OCI-LY7 (cell line): ENCODE measurements at regions of chr4 and their contacts with region 1.

Region 1: GRCh38 chr4:153038623-153039311 is 102.6 kb downstream of the FHDC1 start:
- DNase-seq: no peak
- H3K4me3 ChIP-seq: no peak overlapping the region
- H3K27ac ChIP-seq: no peak overlapping the region
- H3K4me1 ChIP-seq: no peaks in the 10 kb centered on the region
- CTCF ChIP-seq: no peak

Region 2: GRCh38 chr4:152310262-152310661 is 728.5 kb before region 1 on chr4:
- CTCF ChIA-PET with region 1: no interaction called
- POLR2A ChIA-PET with region 1: interaction called, 12 read pairs
- intact Hi-C with region 1: no loop called
- DNase-seq: no peak
- H3K4me3 ChIP-seq: no peak overlapping the region
- H3K27ac ChIP-seq: no peak overlapping the region
- H3K4me1 ChIP-seq: no peaks in the 10 kb centered on the region
- CTCF ChIP-seq: no peak

Region 3: GRCh38 chr4:153832720-153833287 is 794.0 kb after region 1 on chr4:
- CTCF ChIA-PET with region 1: no interaction called
- POLR2A ChIA-PET with region 1: no interaction called
- intact Hi-C with region 1: no loop called
- DNase-seq: no peak
- H3K4me3 ChIP-seq: no peak overlapping the region
- H3K27ac ChIP-seq: no peak overlapping the region
- H3K4me1 ChIP-seq: peaks cover 3% of the 10 kb centered on the region
- CTCF ChIP-seq: no peak